ENCODE measurements at regions of chr2 and their contacts with region 1.

Region 1: GRCh38 chr2:238263204-238264071 is 23.6 kb upstream of the HES6 start:
- ATAC-seq: peak; percentile 76 to 97 (median 88)
- H3K4me3 ChIP-seq: no peak overlapping the region
- H3K27ac ChIP-seq: no peak overlapping the region
- H3K4me1 ChIP-seq: peaks cover 33 to 36% of the 10 kb centered on the region in 2 donors

Region 2: GRCh38 chr2:237858294-237859081 is 404.9 kb before region 1 on chr2:
- in situ Hi-C with region 1: loop called in 7 of 9 experiments (anchors 25 kb)
- ATAC-seq: peak; percentile 80 to 95 (median 90)
- H3K4me3 ChIP-seq: no peak overlapping the region
- H3K27ac ChIP-seq: no peak overlapping the region
- H3K4me1 ChIP-seq: peaks cover 7 to 22% of the 10 kb centered on the region in 2 donors

Region 3: DNA sequence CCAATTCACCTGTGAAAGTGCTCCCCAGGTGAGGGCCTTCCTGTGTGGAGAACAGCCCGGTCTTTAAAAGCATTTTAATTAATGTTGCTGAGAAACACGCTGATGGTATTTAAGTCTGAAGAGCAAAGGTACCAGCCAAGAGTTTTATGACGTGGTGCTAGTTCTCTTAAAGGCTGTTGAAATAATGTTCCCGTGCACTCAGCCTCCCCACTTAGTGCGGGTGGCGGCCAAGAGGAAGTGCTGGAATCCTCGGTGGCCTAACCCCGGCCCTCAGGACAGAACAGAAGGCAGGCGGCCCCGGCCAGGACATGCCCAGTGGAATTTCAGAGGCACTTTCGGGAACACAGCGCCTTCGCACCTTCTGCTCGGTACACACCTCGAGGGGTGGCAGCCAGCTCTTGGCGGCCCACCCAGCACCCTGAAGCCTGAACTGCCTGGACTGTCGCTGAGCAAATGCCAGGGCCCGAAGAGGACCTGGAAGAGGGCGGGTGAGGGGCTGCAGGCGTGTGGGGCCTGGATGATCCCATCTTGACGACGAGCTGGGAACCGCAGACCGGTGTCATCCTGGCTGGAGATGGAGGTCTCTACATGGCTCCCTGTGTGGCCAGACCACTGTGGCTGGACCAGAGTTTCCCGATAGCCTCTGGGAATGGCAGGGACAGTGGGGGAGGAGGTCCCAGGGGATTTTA is 306.2 kb after region 1 on chr2:
- in situ Hi-C with region 1: no loop called
- ATAC-seq: no peak
- H3K4me3 ChIP-seq: no peak overlapping the region
- H3K27ac ChIP-seq: no peak overlapping the region
- H3K4me1 ChIP-seq: peaks cover 5% of the 10 kb centered on the region in 2 donors